K562 (cell line): ENCODE measurements at regions of chr10 and their contacts with region 1.

Region 1: DNA sequence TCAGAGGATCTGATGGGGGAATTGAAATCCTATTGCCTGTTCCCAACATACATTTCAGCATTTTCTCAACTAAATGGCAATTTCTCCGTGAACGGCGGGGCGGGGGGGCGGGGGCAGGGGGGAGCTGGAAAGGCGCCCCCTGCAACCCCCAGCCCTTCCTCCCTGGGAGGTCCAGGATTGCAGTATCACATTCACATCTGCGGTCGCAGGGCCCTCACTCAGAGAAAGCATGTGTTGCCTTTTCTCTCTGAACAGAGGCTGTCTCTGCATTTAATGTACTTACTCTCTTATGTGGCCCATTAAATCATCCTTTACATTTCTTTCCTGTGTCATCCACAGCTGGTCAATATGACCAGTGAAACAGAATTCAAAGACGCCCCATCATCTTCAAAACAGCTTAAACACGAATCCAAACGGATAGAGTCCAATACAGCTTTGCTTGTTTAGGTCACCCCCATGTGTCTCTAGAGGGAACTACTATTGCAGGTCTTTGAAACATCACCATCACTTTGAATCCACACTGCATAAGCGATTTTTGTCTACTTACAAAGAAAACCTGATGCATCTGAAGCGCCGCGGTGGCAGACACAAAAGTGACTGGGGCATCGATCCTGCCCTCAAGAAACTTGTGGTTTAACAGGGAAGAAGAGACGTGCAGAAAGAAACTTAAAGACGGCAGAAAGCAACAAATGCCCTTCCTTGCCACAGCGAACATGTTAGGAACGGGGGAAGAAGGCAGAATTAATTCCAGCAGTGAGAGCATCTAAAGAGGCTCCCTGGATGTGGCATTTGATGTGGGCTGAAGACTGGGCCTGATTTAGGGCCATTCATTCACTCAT is 17.0 kb upstream of the ECHDC3 start:
- DNase-seq: peak; percentile 27 to 81 (median 60)
- ATAC-seq: peak; percentile 96
- H3K4me3 ChIP-seq: no peak overlapping the region
- H3K27ac ChIP-seq: no peak overlapping the region
- H3K4me1 ChIP-seq: peaks cover 0 to 5% of the 10 kb centered on the region in 2 experiments; a peak in 4 of 5 replicates
- H3K27me3 ChIP-seq: no peaks in the 10 kb centered on the region
- CTCF ChIP-seq: peak; percentile 78 to 94 (median 86)
- EP300 ChIP-seq: 0 out of 2 replicates have a peak, but pooled peaks have one; percentile 21
- POLR2A ChIP-seq: no peak
- RAD21 ChIP-seq: peak; percentile 99 to 100

Region 2: DNA sequence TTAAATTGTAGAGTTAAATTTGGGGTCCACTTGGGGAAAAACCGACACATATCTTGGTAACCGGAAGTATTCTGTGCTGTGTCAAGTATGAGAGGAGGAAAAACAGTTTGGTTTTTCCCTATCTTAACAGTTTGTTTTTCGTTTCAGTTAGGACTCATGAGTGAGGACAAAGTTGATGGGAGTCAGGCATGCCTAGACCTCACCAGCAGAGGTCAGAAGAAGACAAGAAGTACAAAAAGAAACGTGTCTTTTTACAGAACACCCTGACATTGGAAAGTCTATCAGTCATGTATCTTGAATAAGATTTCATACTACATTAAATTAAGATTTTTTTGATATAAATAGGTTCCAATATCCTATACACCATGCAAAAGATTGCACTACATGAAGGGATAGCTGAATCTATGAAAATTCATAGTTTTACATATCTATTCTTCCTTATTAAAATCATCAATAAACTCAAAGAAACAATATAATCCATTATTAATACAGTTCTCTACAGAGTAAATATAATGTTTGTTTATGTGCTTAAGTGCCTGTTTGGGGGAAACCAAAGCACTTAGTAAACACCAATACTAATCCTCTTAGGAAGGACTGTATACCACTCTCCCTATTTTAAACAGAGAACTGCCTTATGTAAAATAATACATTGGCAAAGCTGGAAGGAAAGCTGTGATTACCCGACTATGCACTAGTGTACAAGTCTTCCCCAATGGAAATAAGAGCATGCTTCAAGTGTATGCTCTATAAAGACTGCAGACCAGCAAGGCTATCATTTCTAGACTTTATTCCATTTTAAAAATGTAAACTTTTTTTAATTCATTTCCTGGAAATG is 209.3 kb before region 1 on chr10:
- CTCF ChIA-PET with region 1: interaction called, 60 read pairs
- POLR2A ChIA-PET with region 1: no interaction called
- in situ Hi-C with region 1: loop called (anchors 5 kb)
- intact Hi-C with region 1: loop called (anchors 1 kb)
- DNase-seq: peak; percentile 47 to 78 (median 56)
- ATAC-seq: peak; percentile 93
- H3K4me3 ChIP-seq: no peak overlapping the region
- H3K27ac ChIP-seq: peak overlapping the region; percentile 41; the same call in 2 of the 3 replicates
- H3K4me1 ChIP-seq: peaks cover 0 to 9% of the 10 kb centered on the region in 2 experiments; a peak in 2 of 5 replicates
- H3K27me3 ChIP-seq: no peaks in the 10 kb centered on the region
- CTCF ChIP-seq: peak; percentile 67 to 91 (median 84)
- EP300 ChIP-seq: no peak
- POLR2A ChIP-seq: no peak
- RAD21 ChIP-seq: peak; percentile 97 to 98

Region 3: GRCh38 chr10:11934262-11934661 is 209.1 kb after region 1 on chr10:
- CTCF ChIA-PET with region 1: no interaction called
- POLR2A ChIA-PET with region 1: no interaction called
- in situ Hi-C with region 1: no loop called
- intact Hi-C with region 1: no loop called
- DNase-seq: no peak
- ATAC-seq: peak; percentile 55
- H3K4me3 ChIP-seq: no peak overlapping the region
- H3K27ac ChIP-seq: no peak overlapping the region
- H3K4me1 ChIP-seq: no peaks in the 10 kb centered on the region
- H3K27me3 ChIP-seq: no peaks in the 10 kb centered on the region
- CTCF ChIP-seq: no peak
- EP300 ChIP-seq: no peak
- POLR2A ChIP-seq: no peak
- RAD21 ChIP-seq: no peak

Region 4: GRCh38 chr10:12500381-12501303 is 775.5 kb after region 1 on chr10:
- CTCF ChIA-PET with region 1: no interaction called
- POLR2A ChIA-PET with region 1: no interaction called
- in situ Hi-C with region 1: no loop called
- intact Hi-C with region 1: no loop called
- DNase-seq: peak in 1 of 4 experiments; percentile 18
- ATAC-seq: no peak
- H3K4me3 ChIP-seq: no peak overlapping the region
- H3K27ac ChIP-seq: no peak overlapping the region
- H3K4me1 ChIP-seq: no peaks in the 10 kb centered on the region
- H3K27me3 ChIP-seq: peaks cover 23 to 56% of the 10 kb centered on the region in 2 experiments
- CTCF ChIP-seq: no peak
- EP300 ChIP-seq: no peak
- POLR2A ChIP-seq: no peak
- RAD21 ChIP-seq: no peak

Region 5: GRCh38 chr10:13299437-13300287 is 1574.5 kb after region 1 on chr10 and contains the start of gene PHYH:
- CTCF ChIA-PET with region 1: no interaction called
- POLR2A ChIA-PET with region 1: no interaction called
- in situ Hi-C with region 1: no loop called
- intact Hi-C with region 1: no loop called
- DNase-seq: peak; percentile 83 to 90 (median 88)
- ATAC-seq: peak; percentile 89
- H3K4me3 ChIP-seq: peak within 1 kb of the TSS; percentile 58
- H3K27ac ChIP-seq: peak within 1 kb of the TSS; percentile 69
- H3K4me1 ChIP-seq: peaks cover 8 to 32% of the 10 kb centered on the region in 2 experiments; a peak in 3 of 5 replicates
- H3K27me3 ChIP-seq: no peaks in the 10 kb centered on the region
- CTCF ChIP-seq: no peak
- EP300 ChIP-seq: no peak; the same call in 1 of the 2 replicates
- POLR2A ChIP-seq: peak; percentile 69
- RAD21 ChIP-seq: no peak
- polyA plus RNA-seq, gene PHYH: 6.3 to 6.9 TPM